ENCODE measurements at regions of chr4 and their contacts with region 1.

Region 1: GRCh38 chr4:186669159-186669731 is 54.4 kb downstream of the FAT1 start:
- DNase-seq: no peak

Region 2: DNA sequence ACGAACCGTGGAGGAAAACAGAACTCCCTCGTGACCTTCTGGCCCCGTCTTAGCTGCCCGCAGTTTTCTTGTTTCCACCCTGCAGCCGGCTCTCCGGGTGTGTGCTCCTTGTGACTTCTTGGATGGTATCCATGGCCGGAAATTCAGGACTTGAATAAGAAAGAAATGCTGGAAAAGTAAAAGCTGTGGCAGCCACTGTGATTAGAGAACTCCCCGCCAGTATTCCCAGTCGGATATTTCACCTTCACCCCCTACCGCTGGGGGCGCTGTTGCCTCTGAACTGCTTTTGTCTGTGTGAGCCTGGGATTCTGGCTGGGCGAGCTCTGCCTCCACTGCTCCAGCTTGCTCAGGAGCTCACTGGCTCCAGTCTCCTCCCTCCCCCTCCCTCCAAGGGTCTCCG is 519.4 kb before region 1 on chr4:
- intact Hi-C with region 1: no loop called
- DNase-seq: no peak

Region 3: DNA sequence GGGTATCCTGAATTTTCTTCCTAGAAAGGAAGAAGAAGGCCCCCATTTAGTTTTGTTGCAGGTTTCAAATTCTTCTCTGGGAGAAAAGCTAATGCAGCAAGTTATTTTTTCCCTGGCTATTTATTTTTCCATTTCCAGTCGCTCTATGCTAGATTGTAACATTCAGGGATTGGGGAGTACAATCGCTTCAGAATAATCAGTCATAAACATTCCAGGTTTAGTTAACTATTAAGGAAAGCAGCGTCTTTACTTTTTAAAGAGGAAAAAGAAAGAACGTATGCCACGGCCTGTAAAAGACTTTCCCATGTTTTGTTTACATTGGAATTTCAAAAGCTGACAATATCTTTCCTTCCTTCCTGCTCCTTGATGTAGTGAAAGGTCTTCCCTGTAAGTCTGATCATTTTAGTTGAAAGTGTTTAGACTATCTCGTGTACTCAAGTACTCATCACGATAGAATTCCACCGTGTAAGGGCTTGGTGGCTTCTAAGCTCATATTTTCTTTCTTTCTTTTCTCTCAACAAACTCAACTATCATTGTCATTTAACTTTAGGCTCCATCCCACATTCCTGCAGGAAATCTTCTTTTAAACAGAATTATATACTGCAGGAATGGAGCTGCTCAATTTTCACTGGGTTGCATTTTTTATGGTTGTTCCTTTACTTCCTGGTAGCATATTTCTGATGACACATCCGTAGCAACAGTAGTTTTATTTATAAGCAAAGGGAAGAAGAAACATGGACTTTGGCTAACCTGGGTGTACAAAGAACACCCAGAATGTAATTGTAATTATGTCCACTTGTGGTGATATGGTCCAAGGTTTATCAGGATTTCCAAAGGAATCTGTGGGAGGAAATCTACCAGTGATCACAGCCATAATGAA is 267.5 kb after region 1 on chr4:
- intact Hi-C with region 1: loop called in 1 of 2 experiments (anchors 10 kb)
- DNase-seq: no peak

Region 4: GRCh38 chr4:187357821-187358220 is 688.6 kb after region 1 on chr4:
- intact Hi-C with region 1: loop called in 1 of 2 experiments (anchors 5 kb)
- DNase-seq: no peak

Measured in posterior vena cava (tissue), 2 donors.